Ascending aorta (tissue), 2 donors: ENCODE measurements at regions of chr6 and their contacts with region 1.

Region 1: DNA sequence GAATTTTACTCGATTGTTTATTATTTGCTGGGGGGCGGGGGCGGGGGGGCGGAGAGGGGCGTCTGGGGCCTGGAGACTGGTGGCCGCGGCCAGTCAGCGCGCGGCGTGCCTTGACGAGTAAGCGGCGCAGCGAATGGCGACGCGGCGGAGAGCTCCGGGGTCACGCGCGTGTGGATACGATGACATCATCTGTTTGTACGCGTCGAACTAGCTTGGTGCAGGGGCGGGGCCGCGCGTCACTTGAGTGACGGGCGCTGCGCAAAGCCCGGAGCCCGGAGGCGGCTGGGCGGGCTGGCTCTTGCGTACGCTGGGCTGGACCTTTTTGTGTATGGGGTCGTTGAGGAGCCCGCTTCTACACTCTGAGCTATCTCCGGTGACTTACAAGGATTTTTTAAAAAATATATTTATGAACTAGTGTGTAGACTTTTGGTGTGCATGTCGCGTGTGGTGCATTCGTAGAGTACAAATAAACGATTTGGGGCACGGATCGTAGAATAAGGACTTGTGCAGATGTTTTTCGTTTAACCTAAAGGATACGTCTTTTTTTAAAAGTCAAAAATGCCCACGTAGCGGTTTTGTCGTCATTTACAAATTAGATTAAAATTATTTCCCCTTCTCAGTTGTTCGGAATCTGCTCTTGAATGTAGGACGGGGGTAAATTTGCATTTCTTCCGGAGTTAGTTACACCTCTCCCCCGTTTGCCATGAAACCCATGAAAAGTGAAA is 2.2 kb upstream of the FOXO3 start:
- DNase-seq: peak; percentile 92 to 99
- H3K4me3 ChIP-seq: peak overlapping the region; percentile 87 to 93
- H3K27ac ChIP-seq: peak overlapping the region; percentile 98
- H3K4me1 ChIP-seq: peaks cover 4 to 14% of the 10 kb centered on the region in 2 donors
- H3K27me3 ChIP-seq: no peaks in the 10 kb centered on the region
- CTCF ChIP-seq: no peak

Region 2: GRCh38 chr6:108438918-108439317 is 119.6 kb before region 1 on chr6:
- intact Hi-C with region 1: no loop called
- DNase-seq: no peak
- H3K4me3 ChIP-seq: no peak overlapping the region
- H3K27ac ChIP-seq: no peak overlapping the region
- H3K4me1 ChIP-seq: no peaks in the 10 kb centered on the region
- H3K27me3 ChIP-seq: no peaks in the 10 kb centered on the region
- CTCF ChIP-seq: no peak

Region 3: GRCh38 chr6:108655806-108656651 is 97.5 kb after region 1 on chr6:
- intact Hi-C with region 1: loop called (anchors 2 kb)
- DNase-seq: no peak
- H3K4me3 ChIP-seq: peak overlapping the region; percentile 8 to 29
- H3K27ac ChIP-seq: peak overlapping the region; percentile 84 to 90
- H3K4me1 ChIP-seq: peaks cover 23 to 77% of the 10 kb centered on the region in 2 donors
- H3K27me3 ChIP-seq: no peaks in the 10 kb centered on the region
- CTCF ChIP-seq: no peak

Region 4: DNA sequence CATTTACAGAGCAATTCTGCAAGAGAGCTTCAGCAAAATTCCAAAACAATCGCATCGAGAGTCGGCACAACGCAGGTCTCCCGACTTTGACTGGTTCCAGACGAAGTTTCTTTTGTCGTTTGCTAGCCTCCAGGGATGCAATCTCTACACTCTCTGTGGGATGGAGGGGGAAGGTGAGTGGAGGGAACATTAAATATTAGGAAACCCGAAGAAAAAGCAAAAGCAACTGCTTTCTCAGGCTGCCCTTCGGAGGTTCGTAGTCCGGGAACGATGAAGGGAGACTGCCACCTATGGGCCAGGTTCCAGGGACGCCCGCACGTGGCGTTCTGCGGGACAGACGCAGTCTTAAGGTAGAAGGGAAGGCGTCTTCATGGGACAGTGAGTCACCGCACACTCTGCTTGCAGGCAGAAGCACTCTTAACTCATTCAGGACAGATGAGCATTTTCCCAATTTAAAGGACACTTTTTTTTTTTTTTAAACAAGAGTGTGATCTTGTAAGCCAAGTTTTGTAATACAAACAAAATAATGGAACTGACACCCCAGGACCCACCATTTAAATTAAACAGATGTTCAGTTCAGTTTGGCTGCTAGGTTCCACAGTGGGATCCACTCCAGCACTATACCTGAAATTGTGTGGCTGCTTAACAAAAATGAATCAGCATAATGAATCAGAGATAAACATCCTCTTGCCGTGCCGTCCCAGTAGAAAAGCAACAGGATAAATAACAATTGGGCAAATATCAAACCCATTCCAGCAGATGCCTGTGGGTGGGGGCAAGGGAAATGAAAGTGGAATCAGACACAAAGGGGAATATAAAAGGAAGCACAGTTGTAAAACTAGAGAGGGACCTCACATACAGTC is 223.9 kb after region 1 on chr6:
- intact Hi-C with region 1: loop called (anchors 2 kb)
- DNase-seq: peak; percentile 56 to 90
- H3K4me3 ChIP-seq: peak overlapping the region; percentile 47 to 61
- H3K27ac ChIP-seq: peak overlapping the region in 1 of 2 donors; percentile 10
- H3K4me1 ChIP-seq: peaks cover 0 to 12% of the 10 kb centered on the region in 2 donors
- H3K27me3 ChIP-seq: no peaks in the 10 kb centered on the region
- CTCF ChIP-seq: peak; percentile 66 to 79 (median 66)

Region 5: DNA sequence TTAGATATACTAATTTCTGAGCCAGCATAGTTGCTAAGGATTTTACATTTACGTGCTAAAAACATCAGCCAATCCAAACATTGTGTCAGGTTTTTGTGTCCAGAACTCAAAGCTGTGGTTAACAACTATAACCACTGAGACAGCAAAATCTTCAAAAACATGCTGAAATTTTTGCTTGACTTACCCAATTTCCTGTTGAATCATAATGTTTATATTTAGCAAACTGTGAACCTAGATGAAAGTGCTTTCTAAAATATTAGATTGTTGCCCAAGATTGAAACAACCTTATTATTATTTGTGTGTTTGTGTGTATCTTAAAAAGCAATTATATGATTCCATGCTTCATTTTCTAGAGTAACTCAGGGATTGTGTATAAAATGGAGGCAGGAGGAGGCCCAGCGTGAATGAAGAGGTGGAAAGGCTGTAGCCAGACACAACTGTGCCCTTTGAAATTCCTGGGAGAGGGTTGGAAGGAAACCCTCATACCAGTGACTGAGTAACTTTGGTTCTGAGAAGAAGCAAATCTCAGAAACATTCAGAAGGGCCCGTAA is 337.7 kb after region 1 on chr6:
- intact Hi-C with region 1: loop called (anchors 5 kb)
- DNase-seq: no peak
- H3K4me3 ChIP-seq: no peak overlapping the region
- H3K27ac ChIP-seq: peak overlapping the region; percentile 78 to 82
- H3K4me1 ChIP-seq: peaks cover 9 to 30% of the 10 kb centered on the region in 2 donors
- H3K27me3 ChIP-seq: no peaks in the 10 kb centered on the region
- CTCF ChIP-seq: no peak

Region 6: DNA sequence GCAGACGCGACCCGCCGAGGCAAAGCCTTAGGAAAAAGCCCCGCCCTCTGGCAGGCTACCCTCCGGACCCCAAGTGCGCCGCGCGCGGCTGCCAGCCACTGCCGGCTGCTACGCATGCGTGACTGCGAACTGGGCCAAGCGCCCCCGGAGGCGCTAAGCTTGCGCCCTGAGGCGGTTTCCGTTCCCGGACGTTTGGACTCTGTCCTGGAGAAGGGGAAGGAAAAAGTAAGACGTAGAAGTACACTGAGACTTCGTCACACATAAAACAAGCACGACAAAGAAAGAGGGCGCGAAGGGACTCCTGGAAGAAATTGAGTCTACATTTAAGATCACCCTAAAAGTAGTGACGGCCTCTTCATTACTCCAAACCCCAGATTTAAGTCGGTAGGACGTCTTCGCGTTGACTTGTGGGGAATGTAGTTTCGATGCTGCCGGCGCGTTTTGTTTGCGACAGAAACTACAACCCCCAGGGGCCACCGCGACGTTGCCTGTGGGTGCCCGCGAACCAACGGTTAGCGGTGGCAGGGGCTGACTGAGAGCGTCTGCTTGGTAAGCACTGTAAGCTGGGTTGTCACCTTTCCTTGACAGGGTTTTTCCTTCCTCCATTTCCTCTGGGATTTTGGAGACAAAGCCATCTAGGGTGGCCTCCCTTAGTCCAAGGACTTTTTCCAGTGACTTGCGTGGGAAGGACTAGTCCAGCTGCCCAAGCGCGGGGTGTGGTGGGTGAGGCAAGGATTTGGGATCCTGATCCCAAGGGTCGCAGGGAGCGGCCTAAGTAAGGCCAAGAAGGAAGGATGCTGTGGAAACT is 536.7 kb after region 1 on chr6 and contains the start of gene CEP57L1:
- intact Hi-C with region 1: loop called (anchors 2 kb)
- DNase-seq: peak; percentile 88 to 98
- H3K4me3 ChIP-seq: peak within 1 kb of the TSS; percentile 64 to 69
- H3K27ac ChIP-seq: peak within 1 kb of the TSS; percentile 95 to 97
- H3K4me1 ChIP-seq: peaks cover 2 to 13% of the 10 kb centered on the region in 2 donors
- H3K27me3 ChIP-seq: no peaks in the 10 kb centered on the region
- CTCF ChIP-seq: no peak
- total RNA-seq, gene CEP57L1: 1.1 TPM